Pancreas (tissue), 10 donors: ENCODE measurements at regions of chr4 and their contacts with region 1.

Region 1: GRCh38 chr4:22389240-22389870 is 126.5 kb downstream of the ADGRA3 start:
- DNase-seq: peak in 4 of 6 donors; percentile 23 to 53 (median 32)
- ATAC-seq: peak; percentile 61 to 90 (median 86)
- H3K4me3 ChIP-seq: no peak overlapping the region
- H3K27ac ChIP-seq: no peak overlapping the region
- H3K4me1 ChIP-seq: no peaks in the 10 kb centered on the region
- H3K27me3 ChIP-seq: no peaks in the 10 kb centered on the region
- CTCF ChIP-seq: peak; percentile 40 to 71 (median 58)

Region 2: DNA sequence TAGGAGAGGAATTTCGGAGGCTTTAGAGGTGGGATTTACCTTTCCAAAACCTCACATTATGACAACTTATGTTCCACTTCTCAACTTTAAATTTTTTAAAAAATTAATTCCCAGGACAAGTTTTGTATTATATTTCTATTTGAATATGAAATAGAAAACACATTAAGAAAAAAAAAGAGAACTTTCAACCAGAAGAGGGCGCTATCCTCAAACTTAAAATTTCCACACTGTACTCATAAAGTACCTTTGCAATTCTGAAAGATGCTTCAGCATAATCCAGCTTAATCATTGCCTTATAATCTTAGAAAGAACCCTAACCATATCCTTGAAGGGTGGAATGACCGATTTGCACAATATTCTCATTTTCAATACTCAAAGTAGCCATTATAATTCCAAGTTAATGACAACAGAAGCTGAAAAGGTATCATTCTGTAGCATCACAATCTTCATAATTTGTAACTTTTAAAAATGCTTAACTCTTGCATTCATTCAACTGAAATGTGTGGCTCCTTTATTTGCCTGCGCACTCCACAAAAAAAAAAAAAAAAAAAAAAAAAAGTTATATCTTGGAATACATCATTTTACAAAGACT is 598.8 kb before region 1 on chr4:
- intact Hi-C with region 1: loop called in 1 of 3 experiments (anchors 5 kb)
- DNase-seq: no peak
- ATAC-seq: peak in 3 of 4 donors; percentile 28 to 62 (median 44)
- H3K4me3 ChIP-seq: no peak overlapping the region
- H3K27ac ChIP-seq: no peak overlapping the region
- H3K4me1 ChIP-seq: peaks cover 0 to 3% (median 0%) of the 10 kb centered on the region in 3 donors
- H3K27me3 ChIP-seq: no peaks in the 10 kb centered on the region
- CTCF ChIP-seq: peak in 3 of 4 donors; percentile 13 to 36 (median 32)

Region 3: GRCh38 chr4:22522206-22522605 is 132.9 kb after region 1 on chr4:
- intact Hi-C with region 1: no loop called
- DNase-seq: no peak
- ATAC-seq: no peak
- H3K4me3 ChIP-seq: no peak overlapping the region
- H3K27ac ChIP-seq: no peak overlapping the region
- H3K4me1 ChIP-seq: no peaks in the 10 kb centered on the region
- H3K27me3 ChIP-seq: no peaks in the 10 kb centered on the region
- CTCF ChIP-seq: no peak

Region 4: GRCh38 chr4:22625311-22625710 is 236.0 kb after region 1 on chr4:
- intact Hi-C with region 1: no loop called
- DNase-seq: no peak
- ATAC-seq: no peak
- H3K4me3 ChIP-seq: no peak overlapping the region
- H3K27ac ChIP-seq: no peak overlapping the region
- H3K4me1 ChIP-seq: no peaks in the 10 kb centered on the region
- H3K27me3 ChIP-seq: no peaks in the 10 kb centered on the region
- CTCF ChIP-seq: no peak